Heart right ventricle (tissue), 16 donors: ENCODE measurements at regions of chr5 and their contacts with region 1.

Region 1: DNA sequence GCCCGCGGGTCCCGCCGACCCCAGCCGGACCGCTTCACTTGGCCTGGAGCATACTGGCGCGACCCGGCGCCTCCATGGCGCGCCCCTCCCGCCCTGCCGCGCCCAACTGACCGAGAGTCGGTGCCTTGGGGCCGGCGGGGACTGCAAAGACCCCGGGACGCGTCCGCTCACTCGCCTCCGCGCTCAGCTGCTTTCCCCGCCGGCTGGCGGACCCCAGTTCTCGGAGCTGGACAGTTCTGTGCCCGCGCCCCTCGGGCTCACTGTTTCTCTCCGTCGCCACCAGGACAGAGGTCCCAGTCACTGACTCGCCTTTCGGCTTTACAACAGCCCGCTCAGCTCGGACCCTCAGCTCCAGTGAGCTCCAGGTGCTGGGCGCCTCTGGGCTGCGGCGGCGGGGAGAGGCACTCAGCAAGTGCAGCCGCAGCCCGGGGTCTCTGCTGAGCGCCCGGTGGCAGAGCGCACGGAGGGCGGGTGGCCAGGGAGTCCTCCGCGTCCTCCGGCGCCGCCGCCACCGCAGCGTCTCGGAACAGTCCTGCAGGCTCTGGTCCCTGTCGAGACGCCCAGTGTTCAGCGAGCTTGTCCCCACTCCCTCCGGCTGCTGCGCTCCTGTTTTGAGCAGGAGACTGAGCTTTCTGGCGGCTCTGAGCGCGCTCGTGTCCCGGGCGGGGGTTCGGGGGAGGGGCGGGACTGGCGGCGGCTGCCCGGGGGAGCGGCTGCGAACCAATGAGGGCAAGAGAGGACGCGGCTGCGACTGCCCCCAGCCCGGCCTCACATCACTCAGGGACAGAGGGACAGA is at the start of gene SMIM32:
- DNase-seq: peak in 1 of 2 donors; percentile 11
- ATAC-seq: peak; percentile 24 to 66 (median 58)
- H3K4me3 ChIP-seq: peak within 1 kb of the TSS; percentile 35 to 61 (median 53)
- H3K27ac ChIP-seq: no peak within 1 kb of the TSS
- H3K4me1 ChIP-seq: peaks cover 2 to 25% (median 20%) of the 10 kb centered on the region in 9 donors
- H3K27me3 ChIP-seq: peaks cover 0 to 64% (median 49%) of the 10 kb centered on the region in 7 donors
- CTCF ChIP-seq: no peak
- total RNA-seq, gene SMIM32: not detected

Region 2: GRCh38 chr5:135950611-135951010 is 242.1 kb before region 1 on chr5:
- intact Hi-C with region 1: loop called in 1 of 10 experiments (anchors 10 kb)
- DNase-seq: no peak
- ATAC-seq: no peak
- H3K4me3 ChIP-seq: no peak overlapping the region
- H3K27ac ChIP-seq: no peak overlapping the region
- H3K4me1 ChIP-seq: no peaks in the 10 kb centered on the region
- H3K27me3 ChIP-seq: no peaks in the 10 kb centered on the region
- CTCF ChIP-seq: no peak

Region 3: DNA sequence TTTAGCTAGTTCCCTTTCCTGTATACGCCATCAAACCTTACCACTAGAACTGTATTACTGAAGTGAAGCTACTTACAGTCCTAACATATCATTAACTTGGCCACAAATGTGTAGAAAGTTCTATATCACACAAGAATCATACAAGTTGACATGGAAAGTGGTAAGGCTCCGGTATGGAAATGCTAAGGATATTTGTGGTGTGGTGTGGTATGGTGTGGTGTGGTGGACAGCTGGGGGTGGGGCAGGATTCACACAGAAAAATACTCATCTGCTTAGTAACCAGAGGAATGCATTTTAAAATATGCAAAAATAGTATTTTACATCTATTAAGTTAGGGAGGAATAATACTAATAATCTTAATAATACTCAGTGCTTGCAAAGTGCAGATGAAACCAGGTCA is 103.2 kb after region 1 on chr5:
- intact Hi-C with region 1: no loop called
- DNase-seq: no peak
- ATAC-seq: no peak
- H3K4me3 ChIP-seq: no peak overlapping the region
- H3K27ac ChIP-seq: no peak overlapping the region
- H3K4me1 ChIP-seq: no peaks in the 10 kb centered on the region
- H3K27me3 ChIP-seq: peaks cover 0 to 5% (median 0%) of the 10 kb centered on the region in 7 donors
- CTCF ChIP-seq: no peak